HEK293 (cell line): ENCODE measurements at regions of chr12 and their contacts with region 1.

Region 1: GRCh38 chr12:24349051-24349799 is 399.8 kb upstream of the SOX5 start:
- H3K4me3 ChIP-seq: no peak overlapping the region
- H3K27ac ChIP-seq: no peak overlapping the region
- H3K4me1 ChIP-seq: no peaks in the 10 kb centered on the region
- CTCF ChIP-seq: no peak

Region 2: GRCh38 chr12:24364921-24365320 is 15.7 kb after region 1 on chr12:
- CTCF ChIA-PET with region 1: no interaction called
- POLR2A ChIA-PET with region 1: no interaction called
- H3K4me3 ChIP-seq: no peak overlapping the region
- H3K27ac ChIP-seq: no peak overlapping the region
- H3K4me1 ChIP-seq: peaks cover 17% of the 10 kb centered on the region
- CTCF ChIP-seq: no peak

Region 3: DNA sequence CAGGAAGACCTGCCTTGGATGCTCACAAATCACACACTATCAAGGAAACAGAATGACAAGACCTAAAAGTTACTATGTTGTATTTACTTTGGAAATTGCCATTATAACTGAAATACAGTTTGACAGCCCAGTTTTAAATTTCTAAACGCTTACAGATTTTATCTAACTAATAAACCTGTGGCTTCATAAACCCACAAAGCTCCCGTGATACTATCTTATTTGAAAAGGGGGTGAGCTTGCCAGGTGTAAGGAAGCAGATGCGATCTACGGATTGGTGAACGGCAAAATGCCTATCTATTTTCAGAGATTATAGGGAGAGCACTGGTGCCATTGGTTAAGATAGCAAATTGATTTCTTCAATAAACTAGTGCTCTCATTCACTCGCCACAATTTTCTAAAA is 114.2 kb after region 1 on chr12:
- CTCF ChIA-PET with region 1: interaction called, 10 read pairs
- POLR2A ChIA-PET with region 1: no interaction called
- H3K4me3 ChIP-seq: no peak overlapping the region
- H3K27ac ChIP-seq: no peak overlapping the region
- H3K4me1 ChIP-seq: no peaks in the 10 kb centered on the region; the same call in 1 of the 2 replicates
- CTCF ChIP-seq: no peak